Left colon (tissue), 2 donors: ENCODE measurements at regions of chr7 and their contacts with region 1.

Region 1: GRCh38 chr7:111098011-111098925 is 7.3 kb downstream of the LRRN3 start:
- DNase-seq: peak in 1 of 2 donors; percentile 11
- ATAC-seq: peak; percentile 53

Region 2: GRCh38 chr7:111486472-111487142 is 388.3 kb after region 1 on chr7:
- intact Hi-C with region 1: loop called in 1 of 2 experiments (anchors 10 kb)
- DNase-seq: no peak
- ATAC-seq: peak; percentile 58

Region 3: DNA sequence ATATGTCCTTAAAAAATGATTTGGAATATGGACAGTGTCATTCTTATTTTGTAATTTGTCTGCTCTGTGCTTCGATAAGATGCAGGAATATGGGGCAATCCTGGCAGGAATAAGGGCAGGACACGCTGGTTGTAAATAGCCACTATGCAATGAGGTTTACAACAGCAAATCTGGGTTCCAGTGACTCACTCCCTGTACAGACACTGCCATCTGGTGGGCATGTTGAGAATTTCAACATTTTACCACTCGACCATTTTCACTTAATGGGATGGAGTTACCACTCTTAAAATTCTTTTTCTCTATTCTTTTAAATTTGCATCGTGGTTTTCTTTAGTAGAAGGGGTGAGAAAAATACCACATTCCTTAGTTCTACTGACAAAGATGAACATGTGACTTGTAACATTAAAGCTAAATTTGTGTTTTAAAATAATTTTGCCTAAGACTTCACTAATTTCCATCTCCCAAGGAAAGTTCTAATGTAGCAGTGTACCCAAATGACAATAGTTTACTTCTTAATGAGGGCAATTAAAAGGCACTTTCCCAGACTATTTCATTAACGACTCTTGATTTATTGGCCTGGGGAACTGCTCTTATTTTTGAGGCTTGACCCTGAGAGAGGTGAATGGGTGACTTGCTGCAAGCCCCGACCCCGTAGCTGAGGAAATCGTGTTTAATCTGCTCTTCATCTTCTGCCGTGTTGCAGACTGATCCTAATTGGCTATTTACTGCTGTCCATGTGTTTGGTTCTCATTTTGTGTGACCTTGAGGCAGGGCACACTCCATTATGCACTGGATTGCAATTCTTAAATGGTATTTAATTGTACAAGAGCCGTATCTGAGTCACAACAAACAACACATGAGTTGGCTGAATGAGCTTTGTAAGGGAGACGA is 637.6 kb after region 1 on chr7:
- intact Hi-C with region 1: loop called in 1 of 2 experiments (anchors 10 kb)
- DNase-seq: peak; percentile 33 to 37
- ATAC-seq: peak; percentile 89